IMR-90 (cell line): ENCODE measurements at regions of chr3 and their contacts with region 1.

Region 1: GRCh38 chr3:77038468-77038929 is 1.4 kb upstream of the ROBO2 start:
- DNase-seq: peak; percentile 85
- ATAC-seq: peak; percentile 85
- H3K4me3 ChIP-seq: peak overlapping the region; percentile 48
- H3K27ac ChIP-seq: no peak overlapping the region
- H3K4me1 ChIP-seq: no peaks in the 10 kb centered on the region
- H3K27me3 ChIP-seq: peaks cover 29% of the 10 kb centered on the region
- CTCF ChIP-seq: peak; percentile 89
- POLR2A ChIP-seq: no peak
- RAD21 ChIP-seq: peak; percentile 89

Region 2: GRCh38 chr3:76685858-76686257 is 352.6 kb before region 1 on chr3:
- CTCF ChIA-PET with region 1: no interaction called
- POLR2A ChIA-PET with region 1: no interaction called
- dilution Hi-C with region 1: no loop called
- in situ Hi-C with region 1: no loop called
- intact Hi-C with region 1: loop called (anchors 10 kb)
- DNase-seq: no peak
- ATAC-seq: no peak
- H3K4me3 ChIP-seq: no peak overlapping the region
- H3K27ac ChIP-seq: no peak overlapping the region
- H3K4me1 ChIP-seq: no peaks in the 10 kb centered on the region
- H3K27me3 ChIP-seq: no peaks in the 10 kb centered on the region
- CTCF ChIP-seq: no peak
- POLR2A ChIP-seq: no peak
- RAD21 ChIP-seq: no peak

Region 3: GRCh38 chr3:77254967-77255831 is 216.7 kb after region 1 on chr3:
- CTCF ChIA-PET with region 1: interaction called, 3 read pairs
- POLR2A ChIA-PET with region 1: no interaction called
- dilution Hi-C with region 1: no loop called
- in situ Hi-C with region 1: loop called (anchors 5 kb)
- intact Hi-C with region 1: loop called (anchors 1 kb)
- DNase-seq: peak; percentile 69
- ATAC-seq: peak; percentile 88
- H3K4me3 ChIP-seq: no peak overlapping the region
- H3K27ac ChIP-seq: no peak overlapping the region
- H3K4me1 ChIP-seq: no peaks in the 10 kb centered on the region
- H3K27me3 ChIP-seq: no peaks in the 10 kb centered on the region; the same call in 1 of the 2 replicates
- CTCF ChIP-seq: peak; percentile 74
- POLR2A ChIP-seq: no peak
- RAD21 ChIP-seq: peak; percentile 65

Region 4: DNA sequence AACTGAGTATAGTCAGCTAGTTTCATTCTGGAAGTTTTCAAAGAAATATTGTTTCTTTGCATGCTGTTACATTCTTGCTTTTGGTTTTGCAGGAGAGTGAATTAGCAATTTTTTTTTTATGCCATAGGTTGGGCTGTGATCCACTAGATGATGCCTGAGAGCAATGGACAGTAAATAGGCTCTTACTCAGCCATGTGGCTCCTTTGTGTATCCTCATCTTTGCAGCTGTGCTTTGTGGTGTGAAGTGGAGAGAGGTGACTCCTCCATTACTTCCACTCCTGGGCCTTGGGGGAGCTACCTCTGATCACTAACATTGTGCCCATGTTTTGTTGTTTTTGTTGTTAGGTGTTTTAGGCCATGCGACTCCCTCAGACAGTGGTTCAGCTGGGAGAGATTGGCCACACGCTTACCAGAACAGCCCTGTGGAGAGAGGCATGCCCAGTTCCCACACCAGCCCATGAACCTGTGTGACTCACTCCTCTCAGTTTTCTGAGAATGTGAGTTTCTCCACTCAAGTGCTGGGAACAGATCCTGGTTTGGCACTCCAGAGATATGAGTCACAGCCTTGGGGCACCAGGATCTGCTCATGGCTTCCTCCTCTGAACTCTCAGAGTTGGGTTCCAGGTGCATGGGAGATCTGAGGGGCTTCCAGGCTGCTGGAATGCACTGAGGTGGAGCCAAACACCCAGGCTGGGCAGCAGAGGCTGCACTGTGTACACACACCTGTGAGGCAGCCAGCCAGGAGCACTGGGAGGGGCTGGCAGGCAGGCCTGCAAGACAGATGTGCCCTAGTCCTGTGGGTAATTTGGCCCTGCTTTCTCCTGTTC is 786.7 kb after region 1 on chr3:
- CTCF ChIA-PET with region 1: no interaction called
- POLR2A ChIA-PET with region 1: no interaction called
- dilution Hi-C with region 1: no loop called
- in situ Hi-C with region 1: no loop called
- intact Hi-C with region 1: loop called (anchors 10 kb)
- DNase-seq: peak; percentile 50
- ATAC-seq: peak; percentile 60
- H3K4me3 ChIP-seq: no peak overlapping the region
- H3K27ac ChIP-seq: no peak overlapping the region
- H3K4me1 ChIP-seq: no peaks in the 10 kb centered on the region
- H3K27me3 ChIP-seq: no peaks in the 10 kb centered on the region
- CTCF ChIP-seq: no peak
- POLR2A ChIP-seq: no peak
- RAD21 ChIP-seq: no peak

Region 5: DNA sequence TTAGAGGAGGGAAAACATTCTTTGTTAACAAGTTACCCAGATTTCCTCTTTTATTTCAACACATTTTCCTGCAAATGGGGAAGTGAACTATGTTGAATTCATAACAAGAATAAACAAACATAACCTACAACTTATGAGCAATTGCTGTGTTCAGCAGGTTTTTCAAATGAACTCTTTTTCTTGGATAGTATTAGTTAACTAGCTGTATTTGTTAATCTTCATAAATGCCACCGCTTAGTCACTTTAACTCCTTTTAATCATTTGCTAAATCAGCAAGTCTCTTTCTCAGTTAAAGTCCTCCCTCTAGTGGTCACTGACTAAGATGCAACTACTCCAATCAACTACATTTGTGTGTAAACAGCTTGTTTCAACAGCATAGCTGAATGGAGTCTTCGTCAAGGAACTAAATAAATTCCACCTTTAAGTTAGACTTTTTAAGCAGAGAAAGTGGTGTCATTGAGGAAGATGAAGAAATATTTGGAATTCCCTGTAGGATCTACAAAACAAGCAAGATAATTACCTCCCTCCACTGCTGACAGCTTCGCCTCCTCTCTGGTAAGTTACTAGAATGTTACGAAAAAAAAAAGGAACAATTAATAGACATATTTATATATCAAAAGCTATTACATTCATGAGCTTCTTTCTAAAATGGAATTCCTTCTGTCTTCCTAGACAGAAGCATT is 1607.3 kb after region 1 on chr3:
- CTCF ChIA-PET with region 1: interaction called, 4 read pairs
- POLR2A ChIA-PET with region 1: no interaction called
- dilution Hi-C with region 1: no loop called
- in situ Hi-C with region 1: loop called (anchors 10 kb)
- intact Hi-C with region 1: loop called (anchors 1 kb)
- DNase-seq: peak; percentile 81
- ATAC-seq: peak; percentile 84
- H3K4me3 ChIP-seq: no peak overlapping the region
- H3K27ac ChIP-seq: no peak overlapping the region
- H3K4me1 ChIP-seq: peaks cover 2% of the 10 kb centered on the region; the same call in 1 of the 2 replicates
- H3K27me3 ChIP-seq: no peaks in the 10 kb centered on the region
- CTCF ChIP-seq: peak; percentile 88
- POLR2A ChIP-seq: no peak
- RAD21 ChIP-seq: peak; percentile 93